ENCODE measurements at regions of chr9 and their contacts with region 1.

Region 1: DNA sequence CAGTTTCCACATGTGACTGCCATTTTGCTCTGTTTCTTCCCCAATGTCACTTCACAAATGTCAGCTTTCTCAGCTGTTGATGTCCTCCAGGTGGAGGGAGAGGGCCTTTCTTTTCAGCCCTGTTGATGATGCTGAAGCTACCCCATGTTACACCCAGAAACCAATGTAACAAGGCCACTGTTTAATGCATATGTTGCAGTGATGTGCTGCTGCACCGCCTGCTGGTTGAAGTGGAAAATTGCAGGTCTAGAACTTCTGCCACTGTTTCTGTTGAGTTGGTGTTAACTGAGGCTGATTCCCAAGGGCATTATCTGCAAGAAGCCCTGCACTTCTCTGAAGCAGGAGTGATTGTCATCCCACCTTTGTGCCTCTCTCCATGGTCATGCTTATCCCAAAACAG is 428.4 kb downstream of the KDM4C start:
- DNase-seq: no peak
- ATAC-seq: peak; percentile 22; the same call in 2 of the 3 replicates
- H3K4me3 ChIP-seq: no peak overlapping the region
- H3K27ac ChIP-seq: no peak overlapping the region
- H3K4me1 ChIP-seq: no peaks in the 10 kb centered on the region
- H3K27me3 ChIP-seq: no peaks in the 10 kb centered on the region
- CTCF ChIP-seq: peak; percentile 23 to 61 (median 51); a peak in 5 of 6 replicates
- EP300 ChIP-seq: no peak
- POLR2A ChIP-seq: no peak
- RAD21 ChIP-seq: 0 out of 2 replicates have a peak, but pooled peaks have one; percentile 33

Region 2: GRCh38 chr9:7130266-7130820 is 55.8 kb before region 1 on chr9:
- CTCF ChIA-PET with region 1: no interaction called
- POLR2A ChIA-PET with region 1: no interaction called
- RAD21 ChIA-PET with region 1: no interaction called
- SMC1A ChIA-PET with region 1: no interaction called
- in situ Hi-C with region 1: no loop called
- intact Hi-C with region 1: no loop called
- DNase-seq: no peak
- ATAC-seq: no peak
- H3K4me3 ChIP-seq: no peak overlapping the region
- H3K27ac ChIP-seq: no peak overlapping the region
- H3K4me1 ChIP-seq: no peaks in the 10 kb centered on the region
- H3K27me3 ChIP-seq: no peaks in the 10 kb centered on the region
- CTCF ChIP-seq: no peak
- EP300 ChIP-seq: no peak
- POLR2A ChIP-seq: no peak
- RAD21 ChIP-seq: no peak

Region 3: GRCh38 chr9:7165349-7165975 is 20.7 kb before region 1 on chr9:
- CTCF ChIA-PET with region 1: no interaction called
- POLR2A ChIA-PET with region 1: no interaction called
- RAD21 ChIA-PET with region 1: no interaction called
- SMC1A ChIA-PET with region 1: no interaction called
- in situ Hi-C with region 1: no loop called
- intact Hi-C with region 1: no loop called
- DNase-seq: no peak
- ATAC-seq: no peak
- H3K4me3 ChIP-seq: no peak overlapping the region
- H3K27ac ChIP-seq: no peak overlapping the region
- H3K4me1 ChIP-seq: no peaks in the 10 kb centered on the region
- H3K27me3 ChIP-seq: no peaks in the 10 kb centered on the region
- CTCF ChIP-seq: no peak
- EP300 ChIP-seq: no peak
- POLR2A ChIP-seq: no peak
- RAD21 ChIP-seq: no peak

Region 4: GRCh38 chr9:8857926-8858595 is 1671.9 kb after region 1 on chr9:
- CTCF ChIA-PET with region 1: no interaction called
- POLR2A ChIA-PET with region 1: no interaction called
- RAD21 ChIA-PET with region 1: no interaction called
- SMC1A ChIA-PET with region 1: no interaction called
- in situ Hi-C with region 1: loop called (anchors 25 kb)
- intact Hi-C with region 1: no loop called
- DNase-seq: no peak
- ATAC-seq: no peak
- H3K4me3 ChIP-seq: no peak overlapping the region
- H3K27ac ChIP-seq: no peak overlapping the region
- H3K4me1 ChIP-seq: no peaks in the 10 kb centered on the region
- H3K27me3 ChIP-seq: peaks cover 4 to 8% of the 10 kb centered on the region in 2 experiments; a peak in 2 of 4 replicates
- CTCF ChIP-seq: no peak
- EP300 ChIP-seq: no peak
- POLR2A ChIP-seq: no peak
- RAD21 ChIP-seq: no peak

Measured in GM12878 (cell line).